A549 (cell line): ENCODE measurements at regions of chr15 and their contacts with region 1.

Region 1: GRCh38 chr15:89087830-89088604 is at the start of gene ABHD2:
- DNase-seq: peak; percentile 100
- ATAC-seq: peak; percentile 92 to 98
- H3K4me3 ChIP-seq: peak within 1 kb of the TSS; percentile 78
- H3K27ac ChIP-seq: peak within 1 kb of the TSS; percentile 80 to 88
- H3K4me1 ChIP-seq: peaks cover 44% of the 10 kb centered on the region
- CTCF ChIP-seq: no peak
- EP300 ChIP-seq: no peak
- POLR2A ChIP-seq: peak; percentile 70
- RAD21 ChIP-seq: 0 out of 5 replicates have a peak, but pooled peaks of 1 of the 2 experiments have one; percentile 30
- polyA plus RNA-seq, gene ABHD2: 63.3 and 76.4 TPM in 2 replicates

Region 2: GRCh38 chr15:88791637-88792036 is 296.4 kb before region 1 on chr15:
- CTCF ChIA-PET with region 1: no interaction called
- POLR2A ChIA-PET with region 1: no interaction called
- DNase-seq: peak in 1 of 2 experiments; percentile 18
- ATAC-seq: peak; percentile 48 to 59; a peak in 4 of 6 replicates
- H3K4me3 ChIP-seq: no peak overlapping the region
- H3K27ac ChIP-seq: no peak overlapping the region; a peak in 1 of 6 replicates
- H3K4me1 ChIP-seq: peaks cover 8% of the 10 kb centered on the region; the same call in 2 of the 3 replicates
- CTCF ChIP-seq: no peak
- EP300 ChIP-seq: no peak
- POLR2A ChIP-seq: no peak
- RAD21 ChIP-seq: no peak

Region 3: GRCh38 chr15:89068325-89068784 is 19.7 kb before region 1 on chr15:
- CTCF ChIA-PET with region 1: interaction called, 11 read pairs
- POLR2A ChIA-PET with region 1: interaction called, 12 read pairs
- DNase-seq: peak in 1 of 2 experiments; percentile 46
- ATAC-seq: peak; percentile 67; a peak in 4 of 6 replicates
- H3K4me3 ChIP-seq: no peak overlapping the region
- H3K27ac ChIP-seq: peak overlapping the region; percentile 34 to 57; a peak in 4 of 6 replicates
- H3K4me1 ChIP-seq: peaks cover 25% of the 10 kb centered on the region; the same call in 2 of the 3 replicates
- CTCF ChIP-seq: no peak
- EP300 ChIP-seq: no peak
- POLR2A ChIP-seq: no peak
- RAD21 ChIP-seq: no peak

Region 4: DNA sequence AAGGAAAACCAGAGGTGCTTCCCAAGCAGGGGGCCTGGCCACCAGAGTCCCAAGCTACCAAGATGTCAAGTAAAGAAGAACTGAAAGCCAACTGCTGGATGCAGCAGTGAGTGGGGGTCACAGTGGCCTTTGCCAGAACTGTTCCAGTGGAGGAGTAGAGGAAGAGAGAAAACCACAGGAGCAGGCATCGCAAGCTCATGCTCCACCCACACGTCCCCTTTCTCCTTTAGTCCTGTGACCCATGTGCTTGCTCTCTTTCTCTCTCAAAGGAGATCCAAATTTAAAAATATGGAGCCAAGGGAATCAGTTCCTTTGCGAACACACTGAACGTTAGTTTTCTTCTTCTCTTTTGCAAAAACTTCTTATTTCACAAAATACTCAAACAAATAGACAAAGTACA is 12.2 kb before region 1 on chr15:
- CTCF ChIA-PET with region 1: interaction called, 13 read pairs
- POLR2A ChIA-PET with region 1: interaction called, 7 read pairs
- DNase-seq: no peak
- ATAC-seq: no peak
- H3K4me3 ChIP-seq: no peak overlapping the region
- H3K27ac ChIP-seq: no peak overlapping the region
- H3K4me1 ChIP-seq: 0 out of 3 replicates have a peak, but pooled peaks cover 3% of the 10 kb centered on the region
- CTCF ChIP-seq: no peak
- EP300 ChIP-seq: no peak
- POLR2A ChIP-seq: no peak
- RAD21 ChIP-seq: no peak

Region 5: GRCh38 chr15:89101302-89102191 is 13.5 kb after region 1 on chr15:
- CTCF ChIA-PET with region 1: interaction called, 75 read pairs
- POLR2A ChIA-PET with region 1: interaction called, 31 read pairs
- DNase-seq: peak; percentile 97 to 98
- ATAC-seq: peak; percentile 92 to 93
- H3K4me3 ChIP-seq: no peak overlapping the region; the same call in 2 of the 3 replicates
- H3K27ac ChIP-seq: peak overlapping the region; percentile 85 to 88
- H3K4me1 ChIP-seq: peaks cover 99% of the 10 kb centered on the region
- CTCF ChIP-seq: no peak
- EP300 ChIP-seq: peak; percentile 69 to 71; a peak in 2 of 5 replicates
- POLR2A ChIP-seq: no peak
- RAD21 ChIP-seq: peak; percentile 8 to 24; a peak in 1 of 5 replicates

Region 6: DNA sequence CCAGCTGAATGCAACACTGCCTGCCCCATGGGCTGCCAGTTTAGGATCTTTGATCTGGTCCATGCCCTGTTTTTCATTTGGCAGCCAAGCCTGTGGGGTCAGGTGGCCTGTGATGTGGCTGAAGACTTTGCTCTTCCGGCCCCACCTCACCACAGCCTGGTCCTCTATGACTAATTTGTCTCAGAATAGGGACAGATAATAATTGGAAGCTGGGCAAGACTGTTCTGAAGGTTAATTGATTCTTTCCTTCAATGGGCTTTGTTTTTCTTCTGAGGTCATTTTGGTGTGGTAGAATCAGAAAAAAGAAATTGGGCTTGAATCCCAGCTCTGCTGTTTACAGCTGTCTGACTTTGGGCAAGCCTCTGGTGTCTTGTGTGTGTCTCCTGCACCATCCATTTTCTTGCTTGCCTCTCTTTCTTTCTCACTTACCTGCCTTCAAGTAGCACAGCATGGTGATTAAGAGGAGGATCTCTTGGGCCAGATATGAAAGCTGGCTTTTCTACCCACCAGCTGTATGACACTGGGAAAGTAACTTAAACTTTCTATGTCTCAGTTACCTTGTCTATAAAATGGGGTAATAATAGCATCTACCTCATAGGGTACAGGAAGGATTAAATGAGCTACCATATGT is 24.4 kb after region 1 on chr15:
- CTCF ChIA-PET with region 1: interaction called, 24 read pairs
- POLR2A ChIA-PET with region 1: interaction called, 11 read pairs
- DNase-seq: peak in 1 of 2 experiments; percentile 71
- ATAC-seq: peak; percentile 55 to 65; a peak in 4 of 6 replicates
- H3K4me3 ChIP-seq: no peak overlapping the region
- H3K27ac ChIP-seq: peak overlapping the region; percentile 87 to 95
- H3K4me1 ChIP-seq: peaks cover 85% of the 10 kb centered on the region
- CTCF ChIP-seq: no peak
- EP300 ChIP-seq: 0 out of 5 replicates have a peak, but pooled peaks of 1 of the 2 experiments have one; percentile 16
- POLR2A ChIP-seq: no peak
- RAD21 ChIP-seq: no peak

Region 7: GRCh38 chr15:89119489-89120123 is 31.6 kb after region 1 on chr15:
- CTCF ChIA-PET with region 1: interaction called, 24 read pairs
- POLR2A ChIA-PET with region 1: interaction called, 25 read pairs
- DNase-seq: peak; percentile 91 to 95
- ATAC-seq: peak; percentile 77 to 88
- H3K4me3 ChIP-seq: peak overlapping the region; percentile 16; the same call in 2 of the 3 replicates
- H3K27ac ChIP-seq: peak overlapping the region; percentile 87 to 95
- H3K4me1 ChIP-seq: peaks cover 96% of the 10 kb centered on the region
- CTCF ChIP-seq: no peak
- EP300 ChIP-seq: no peak
- POLR2A ChIP-seq: no peak
- RAD21 ChIP-seq: no peak; a peak in 1 of 5 replicates